ENCODE measurements at regions of chr1 and their contacts with region 1.

Region 1: GRCh38 chr1:58281772-58282171 is 264.8 kb downstream of the OMA1 start:
- DNase-seq: no peak
- H3K4me3 ChIP-seq: no peak overlapping the region
- H3K27ac ChIP-seq: no peak overlapping the region
- H3K4me1 ChIP-seq: no peaks in the 10 kb centered on the region
- H3K27me3 ChIP-seq: no peaks in the 10 kb centered on the region
- CTCF ChIP-seq: no peak

Region 2: GRCh38 chr1:58539553-58539952 is 257.8 kb after region 1 on chr1:
- CTCF ChIA-PET with region 1: no interaction called
- POLR2A ChIA-PET with region 1: no interaction called
- intact Hi-C with region 1: no loop called
- DNase-seq: no peak
- H3K4me3 ChIP-seq: no peak overlapping the region
- H3K27ac ChIP-seq: no peak overlapping the region
- H3K4me1 ChIP-seq: peaks cover 11% of the 10 kb centered on the region
- H3K27me3 ChIP-seq: no peaks in the 10 kb centered on the region
- CTCF ChIP-seq: no peak

Region 3: DNA sequence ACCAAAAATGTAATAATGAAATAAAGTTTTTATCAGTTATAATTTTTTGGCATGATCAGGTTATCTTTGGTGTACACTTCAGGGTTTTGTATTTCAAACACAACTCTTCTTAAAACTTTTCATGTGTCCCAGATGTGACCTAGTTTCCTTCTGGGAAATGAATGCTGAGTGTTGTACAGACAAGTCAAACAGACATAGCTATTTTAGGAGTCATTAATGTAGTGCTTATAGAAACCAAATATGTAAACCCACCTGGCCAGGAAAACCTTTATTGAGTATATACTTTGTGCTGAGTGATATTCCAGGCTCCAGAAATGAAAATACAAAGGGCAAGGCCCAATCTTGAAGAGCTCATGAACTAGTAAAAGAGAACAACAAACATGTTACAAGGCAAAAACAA is 1507.1 kb after region 1 on chr1:
- CTCF ChIA-PET with region 1: no interaction called
- POLR2A ChIA-PET with region 1: interaction called, 14 read pairs
- intact Hi-C with region 1: no loop called
- DNase-seq: no peak
- H3K4me3 ChIP-seq: no peak overlapping the region
- H3K27ac ChIP-seq: no peak overlapping the region
- H3K4me1 ChIP-seq: peaks cover 9% of the 10 kb centered on the region
- H3K27me3 ChIP-seq: no peaks in the 10 kb centered on the region
- CTCF ChIP-seq: no peak

Measured in A673 (cell line).